ENCODE measurements at regions of chr22 and their contacts with region 1.

Region 1: DNA sequence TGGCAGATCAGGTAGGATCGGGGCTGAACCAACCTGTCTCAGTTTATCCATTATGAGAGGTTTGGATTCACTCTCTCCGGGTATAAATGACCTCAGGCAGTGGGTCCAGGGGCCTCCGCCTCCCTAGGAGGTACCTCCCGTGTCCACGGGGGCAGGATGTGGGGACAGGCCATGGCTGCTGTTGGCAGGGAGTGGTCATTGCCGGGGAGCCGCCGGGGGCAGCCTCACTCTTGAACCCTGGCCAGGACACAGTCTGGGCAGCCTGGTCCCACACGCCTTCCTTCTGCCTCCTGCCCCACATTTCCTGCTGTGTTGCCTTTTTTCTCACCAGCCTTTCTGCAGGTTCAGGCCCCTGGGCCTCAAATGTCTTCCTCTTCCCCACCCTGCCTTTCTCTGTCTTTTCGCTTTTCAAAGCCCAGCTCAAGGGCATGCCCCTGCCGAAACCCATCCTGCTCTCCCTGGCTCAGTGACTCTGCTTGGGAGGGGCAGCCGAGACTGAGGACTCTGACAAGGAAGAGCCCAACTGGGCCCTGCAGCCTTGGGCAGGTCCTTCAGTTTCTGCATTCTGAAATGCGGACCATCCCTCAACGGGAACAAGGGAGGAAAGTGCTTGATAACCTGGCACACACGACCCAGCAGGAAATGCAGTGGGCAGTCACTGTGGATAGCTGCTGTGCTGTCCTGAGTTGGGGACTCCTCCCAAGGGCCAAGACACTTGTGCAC is 31.1 kb downstream of the ZC3H7B start:
- DNase-seq: no peak
- ATAC-seq: no peak

Region 2: DNA sequence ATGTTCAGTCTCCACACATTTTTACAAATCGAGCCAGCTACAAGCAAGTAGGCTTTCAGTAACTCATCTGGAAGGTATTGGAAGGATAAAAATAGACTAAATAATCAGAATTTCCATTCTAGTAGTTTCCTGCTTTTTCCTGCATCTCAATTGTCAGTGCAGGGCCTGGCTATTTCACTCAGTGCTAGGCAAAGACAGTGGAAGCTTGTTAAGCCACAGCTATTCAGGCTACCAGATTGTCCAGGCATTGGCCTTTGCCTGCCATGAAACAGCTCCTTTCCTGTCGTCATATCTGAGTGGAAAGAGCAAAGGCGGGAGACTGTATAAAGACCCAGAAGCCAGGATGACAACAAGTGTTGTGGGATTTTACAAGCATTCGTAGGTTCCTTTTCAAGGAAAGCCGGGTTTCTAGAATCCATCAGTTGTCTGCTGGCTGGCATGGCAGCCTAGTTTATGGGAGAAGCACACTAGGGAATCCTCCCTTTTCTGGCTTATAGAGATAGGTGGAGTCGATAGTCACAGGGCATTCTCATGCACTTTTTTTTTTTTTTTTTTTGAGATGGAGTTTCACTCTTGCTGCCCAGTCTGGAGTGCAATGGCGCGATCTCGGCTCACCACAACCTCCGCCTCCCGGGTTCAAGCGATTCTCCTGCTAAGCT is 1156.7 kb before region 1 on chr22:
- intact Hi-C with region 1: no loop called
- DNase-seq: no peak
- ATAC-seq: no peak

Region 3: DNA sequence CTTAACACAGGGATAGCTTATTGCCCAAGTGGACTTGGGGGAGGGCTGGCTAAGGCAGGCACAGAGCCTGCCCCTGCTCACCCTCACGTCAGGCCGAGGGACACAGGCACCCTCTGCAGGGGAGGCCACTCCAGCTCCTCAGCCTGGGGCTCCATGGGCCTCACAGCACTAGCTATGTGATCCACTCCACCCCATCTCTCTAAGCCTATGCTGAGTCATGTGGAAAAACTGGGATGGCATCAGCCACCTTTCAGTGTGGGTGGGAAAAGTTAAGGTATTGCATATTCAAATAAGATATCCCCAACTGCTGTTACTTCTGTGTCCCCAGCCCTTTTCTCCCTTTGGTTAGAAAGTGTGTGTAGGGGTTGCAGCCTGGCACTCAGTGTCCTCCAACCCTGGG is 68.7 kb before region 1 on chr22:
- intact Hi-C with region 1: loop called (anchors 2 kb)
- DNase-seq: no peak
- ATAC-seq: no peak

Region 4: GRCh38 chr22:41367039-41367679 is 34.8 kb after region 1 on chr22:
- intact Hi-C with region 1: no loop called
- DNase-seq: peak; percentile 98
- ATAC-seq: peak; percentile 95